Activated CD4-positive, alpha-beta T cell treated with anti-CD3 and anti-CD28 coated beads for 36 hours (primary cell): ENCODE measurements at regions of chr11 and their contacts with region 1.

Region 1: DNA sequence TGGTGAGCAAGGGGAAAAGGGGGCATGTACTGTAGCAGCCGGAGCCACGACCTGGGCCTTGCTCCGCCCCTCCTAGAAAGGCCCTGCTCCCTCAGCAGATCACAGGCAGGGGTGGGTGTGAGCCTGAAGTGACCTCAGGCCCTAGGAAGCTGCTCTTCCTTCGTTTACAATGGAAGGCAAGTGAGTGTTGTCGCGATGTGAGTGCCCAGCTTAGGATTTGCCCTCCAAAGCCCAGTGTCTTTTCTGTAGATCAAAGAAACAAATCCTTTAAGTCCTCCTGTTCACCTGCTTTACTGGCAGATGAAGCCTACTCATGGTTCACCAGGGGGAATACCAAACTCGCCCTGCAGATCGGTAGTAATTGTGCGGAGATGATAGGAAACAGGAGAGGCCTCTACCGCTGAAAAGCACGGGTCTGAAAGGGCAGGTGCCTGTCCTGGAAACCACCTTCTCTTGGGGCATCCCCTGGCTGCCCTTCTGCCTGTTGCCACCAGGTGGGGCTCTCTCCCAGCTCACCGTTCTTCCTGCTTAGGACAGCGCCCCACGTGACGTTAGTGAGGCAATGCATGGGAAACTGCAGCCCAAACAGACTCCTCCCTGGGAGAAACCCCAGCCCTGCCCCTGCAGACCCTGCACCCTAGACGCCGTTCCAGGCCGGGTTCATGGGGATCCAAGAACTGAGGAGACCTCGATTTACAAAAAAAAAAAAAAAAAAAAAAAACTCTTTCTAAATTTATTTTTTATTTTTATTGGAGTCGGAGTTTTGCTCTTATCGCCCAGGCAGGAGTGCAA is 45.9 kb upstream of the RAB1B start:
- DNase-seq: peak; percentile 97
- ATAC-seq: peak; percentile 94
- H3K4me3 Mint-ChIP-seq: peak overlapping the region; percentile 27
- H3K27ac Mint-ChIP-seq: peak overlapping the region; percentile 90
- H3K4me1 Mint-ChIP-seq: peaks cover 18% of the 10 kb centered on the region
- H3K27me3 Mint-ChIP-seq: no peaks in the 10 kb centered on the region

Region 2: DNA sequence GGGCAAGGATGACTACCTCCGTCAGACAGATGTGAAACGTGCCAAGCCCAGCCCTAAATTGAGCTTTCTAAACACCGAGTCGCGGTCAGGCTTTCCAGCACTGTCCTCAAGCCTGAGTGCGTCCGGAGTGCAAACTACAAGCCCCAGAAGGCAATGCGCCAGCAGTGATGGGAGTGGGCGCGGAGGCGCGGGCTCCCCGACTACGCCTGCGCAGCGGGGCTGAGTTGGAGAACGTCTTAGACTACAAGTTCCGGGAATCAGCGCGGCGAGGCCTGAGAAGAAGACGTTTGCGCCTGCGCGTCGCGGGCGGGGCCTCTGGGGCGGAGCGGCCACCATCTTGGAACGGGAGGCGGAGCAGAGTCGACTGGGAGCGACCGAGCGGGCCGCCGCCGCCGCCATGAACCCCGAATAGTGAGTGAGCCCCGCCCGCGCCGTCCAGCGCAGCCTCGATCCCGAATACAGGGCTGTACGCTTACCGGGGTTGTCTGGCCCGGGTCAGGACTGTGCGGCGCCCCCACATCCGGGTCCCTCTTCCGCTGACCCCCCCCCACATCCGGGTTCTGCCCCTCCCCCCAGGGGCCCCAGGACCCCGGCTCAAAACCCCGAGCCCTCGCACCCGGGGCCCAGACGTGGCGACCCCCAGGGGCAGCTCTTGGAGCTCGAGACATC is 45.9 kb after region 1 on chr11 and contains the start of gene RAB1B:
- CTCF ChIA-PET with region 1: interaction called, 10 read pairs
- POLR2A ChIA-PET with region 1: interaction called, 3 read pairs
- intact Hi-C with region 1: loop called (anchors 1 kb)
- DNase-seq: peak; percentile 100
- ATAC-seq: peak; percentile 88
- H3K4me3 Mint-ChIP-seq: peak within 1 kb of the TSS; percentile 100
- H3K27ac Mint-ChIP-seq: peak within 1 kb of the TSS; percentile 97
- H3K4me1 Mint-ChIP-seq: peaks cover 28% of the 10 kb centered on the region
- H3K27me3 Mint-ChIP-seq: no peaks in the 10 kb centered on the region
- total RNA-seq, gene RAB1B: 114 to 147 TPM

Region 3: DNA sequence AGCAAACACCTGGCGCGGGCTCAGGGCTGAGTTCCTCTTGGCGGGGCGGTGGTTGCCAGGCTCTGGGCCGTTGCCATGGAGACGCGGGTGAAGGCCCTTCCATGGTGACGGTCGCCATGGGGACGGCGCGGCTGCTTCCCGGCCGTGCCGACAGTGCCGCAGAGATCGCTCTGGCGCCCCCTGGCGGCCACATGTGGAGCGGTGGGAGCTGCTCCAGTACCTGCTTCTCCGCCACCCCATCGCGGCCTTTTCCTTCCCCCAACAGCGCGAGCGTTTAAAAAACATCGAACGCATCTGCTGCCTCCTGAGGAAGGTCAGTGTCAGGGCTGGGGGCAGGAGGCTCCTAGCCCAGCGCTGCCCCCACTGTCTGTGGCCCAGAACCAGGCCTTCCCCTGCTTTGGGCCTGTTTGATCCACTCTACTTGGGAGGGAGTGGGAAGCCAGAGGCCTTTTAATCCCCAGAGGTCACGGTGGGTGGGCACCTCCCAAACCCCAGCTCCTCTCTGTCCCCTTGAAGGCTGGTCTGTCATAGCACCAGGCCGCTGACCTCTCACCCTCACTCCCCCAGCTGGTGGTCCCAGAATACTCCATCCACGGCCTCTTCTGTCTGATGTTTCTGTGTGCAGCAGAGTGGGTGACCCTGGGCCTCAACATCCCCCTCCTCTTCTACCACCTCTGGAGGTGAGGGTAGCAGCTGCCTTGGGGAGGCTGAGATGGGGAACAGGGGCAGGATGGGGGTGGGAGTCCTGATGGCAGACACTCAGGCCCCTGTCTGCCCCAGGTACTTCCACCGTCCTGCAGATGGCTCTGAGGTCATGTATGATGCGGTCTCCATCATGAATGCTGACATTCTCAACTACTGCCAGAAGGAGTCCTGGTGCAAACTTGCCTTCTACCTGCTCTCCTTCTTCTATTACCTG is 60.2 kb after region 1 on chr11:
- CTCF ChIA-PET with region 1: interaction called, 13 read pairs
- POLR2A ChIA-PET with region 1: no interaction called
- intact Hi-C with region 1: loop called (anchors 1 kb)
- DNase-seq: peak; percentile 100
- ATAC-seq: peak; percentile 93
- H3K4me3 Mint-ChIP-seq: peak overlapping the region; percentile 40
- H3K27ac Mint-ChIP-seq: no peak overlapping the region
- H3K4me1 Mint-ChIP-seq: peaks cover 29% of the 10 kb centered on the region
- H3K27me3 Mint-ChIP-seq: no peaks in the 10 kb centered on the region

Region 4: DNA sequence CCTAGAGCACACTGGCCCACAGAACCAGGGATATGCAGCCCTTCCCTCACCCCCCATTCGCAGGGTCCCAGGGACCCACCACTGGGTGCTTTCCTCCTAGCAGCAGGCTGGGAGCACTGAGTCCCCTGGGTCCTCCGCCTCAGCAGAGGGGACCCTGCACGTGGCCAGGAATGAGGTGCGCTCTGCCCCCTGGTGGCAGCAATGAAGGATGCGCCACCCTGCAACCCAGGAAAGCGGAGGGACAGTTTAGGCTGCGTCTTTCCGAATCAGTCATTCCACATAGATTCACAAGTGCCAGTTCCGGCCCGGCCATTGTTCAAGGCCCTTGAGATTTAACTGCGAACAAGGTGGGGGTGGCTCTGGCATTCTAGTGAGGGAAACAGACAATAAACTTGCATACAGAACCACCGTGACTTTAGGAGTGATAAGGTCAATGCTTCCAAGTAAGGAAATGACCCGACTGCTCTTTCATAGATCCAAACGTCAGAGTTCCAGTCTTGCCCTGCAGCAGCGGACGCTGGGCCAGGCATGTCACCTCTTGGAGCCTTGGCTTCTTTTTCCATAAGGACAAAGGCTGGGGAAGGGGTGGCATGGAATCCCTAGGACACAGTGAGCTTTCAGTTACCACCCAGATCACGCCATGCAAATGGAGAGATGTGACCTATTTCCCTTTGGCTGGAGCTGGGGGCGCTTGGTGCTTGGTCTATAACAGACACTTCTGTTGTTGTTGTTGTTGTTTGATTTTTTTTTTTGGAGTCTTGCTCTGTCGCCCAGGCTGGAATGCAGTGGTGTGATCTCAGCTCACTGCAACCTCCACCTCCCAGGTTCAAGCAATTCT is 106.0 kb after region 1 on chr11:
- CTCF ChIA-PET with region 1: interaction called, 3 read pairs
- POLR2A ChIA-PET with region 1: no interaction called
- intact Hi-C with region 1: loop called (anchors 1 to 5 kb)
- DNase-seq: peak; percentile 90
- ATAC-seq: peak; percentile 91
- H3K4me3 Mint-ChIP-seq: no peak overlapping the region
- H3K27ac Mint-ChIP-seq: peak overlapping the region; percentile 73
- H3K4me1 Mint-ChIP-seq: peaks cover 31% of the 10 kb centered on the region
- H3K27me3 Mint-ChIP-seq: no peaks in the 10 kb centered on the region